Heart right ventricle (tissue), 16 donors: ENCODE measurements at regions of chr12 and their contacts with region 1.

Region 1: DNA sequence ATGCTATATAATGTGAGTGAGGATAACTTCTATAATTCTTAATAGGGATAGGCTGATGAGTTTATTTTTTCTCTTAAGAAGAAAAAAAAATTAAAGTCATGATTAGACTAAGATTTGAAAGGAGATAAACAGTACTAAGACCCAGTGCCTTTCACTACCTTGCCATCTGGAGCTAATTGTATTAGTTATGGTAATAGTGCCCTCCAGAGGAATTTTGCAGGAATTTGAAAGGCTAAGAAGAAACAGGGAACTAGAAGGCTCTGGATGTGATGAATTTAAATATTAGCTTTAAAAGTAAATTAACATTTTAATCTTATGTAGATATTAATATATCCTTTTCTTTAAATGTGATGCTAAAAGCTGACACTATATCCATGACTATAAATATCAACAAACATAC is 36.6 kb upstream of the PIK3C2G start:
- DNase-seq: no peak
- ATAC-seq: no peak
- H3K4me3 ChIP-seq: no peak overlapping the region
- H3K27ac ChIP-seq: no peak overlapping the region
- H3K4me1 ChIP-seq: no peaks in the 10 kb centered on the region
- H3K27me3 ChIP-seq: no peaks in the 10 kb centered on the region
- CTCF ChIP-seq: peak in 7 of 9 donors; percentile 25 to 57 (median 45)

Region 2: DNA sequence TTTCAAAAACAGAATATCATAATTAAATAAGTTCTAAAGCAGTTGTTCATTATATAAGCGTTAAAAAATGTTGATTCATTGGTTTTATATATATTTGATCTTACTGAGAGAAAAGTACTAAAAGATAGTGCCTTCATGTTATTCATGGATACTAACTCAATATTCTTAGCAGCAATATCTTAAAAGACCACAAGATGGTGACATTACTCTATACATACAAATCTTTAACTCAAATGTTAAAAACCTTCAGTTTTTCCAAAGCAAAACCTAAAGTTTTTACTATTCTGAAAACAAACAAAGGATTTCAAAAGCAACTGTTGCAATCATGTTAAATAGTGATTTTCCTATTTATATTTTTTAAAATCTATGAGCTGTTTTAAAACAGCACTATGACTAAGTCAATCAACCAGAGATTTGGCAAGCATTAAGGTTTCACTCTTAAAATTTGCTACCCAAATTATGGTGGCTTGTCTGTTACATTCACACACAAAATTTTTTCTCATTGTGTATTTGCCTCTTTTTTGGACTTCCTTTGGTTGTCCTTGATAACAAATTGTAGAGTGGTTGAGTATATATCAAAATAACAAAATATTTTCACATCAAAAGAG is 84.7 kb before region 1 on chr12:
- intact Hi-C with region 1: loop called in 4 of 10 experiments (anchors 5 to 10 kb)
- DNase-seq: no peak
- ATAC-seq: no peak
- H3K4me3 ChIP-seq: no peak overlapping the region
- H3K27ac ChIP-seq: no peak overlapping the region
- H3K4me1 ChIP-seq: peaks cover 0 to 21% (median 0%) of the 10 kb centered on the region in 9 donors
- H3K27me3 ChIP-seq: no peaks in the 10 kb centered on the region
- CTCF ChIP-seq: peak; percentile 24 to 71 (median 67)

Region 3: GRCh38 chr12:18146363-18146762 is 78.4 kb before region 1 on chr12:
- intact Hi-C with region 1: loop called in 5 of 10 experiments (anchors 5 to 10 kb)
- DNase-seq: no peak
- ATAC-seq: no peak
- H3K4me3 ChIP-seq: no peak overlapping the region
- H3K27ac ChIP-seq: peak overlapping the region in 1 of 10 donors; percentile 61
- H3K4me1 ChIP-seq: peaks cover 0 to 16% (median 0%) of the 10 kb centered on the region in 9 donors
- H3K27me3 ChIP-seq: peaks cover 0 to 3% (median 0%) of the 10 kb centered on the region in 7 donors
- CTCF ChIP-seq: no peak

Region 4: DNA sequence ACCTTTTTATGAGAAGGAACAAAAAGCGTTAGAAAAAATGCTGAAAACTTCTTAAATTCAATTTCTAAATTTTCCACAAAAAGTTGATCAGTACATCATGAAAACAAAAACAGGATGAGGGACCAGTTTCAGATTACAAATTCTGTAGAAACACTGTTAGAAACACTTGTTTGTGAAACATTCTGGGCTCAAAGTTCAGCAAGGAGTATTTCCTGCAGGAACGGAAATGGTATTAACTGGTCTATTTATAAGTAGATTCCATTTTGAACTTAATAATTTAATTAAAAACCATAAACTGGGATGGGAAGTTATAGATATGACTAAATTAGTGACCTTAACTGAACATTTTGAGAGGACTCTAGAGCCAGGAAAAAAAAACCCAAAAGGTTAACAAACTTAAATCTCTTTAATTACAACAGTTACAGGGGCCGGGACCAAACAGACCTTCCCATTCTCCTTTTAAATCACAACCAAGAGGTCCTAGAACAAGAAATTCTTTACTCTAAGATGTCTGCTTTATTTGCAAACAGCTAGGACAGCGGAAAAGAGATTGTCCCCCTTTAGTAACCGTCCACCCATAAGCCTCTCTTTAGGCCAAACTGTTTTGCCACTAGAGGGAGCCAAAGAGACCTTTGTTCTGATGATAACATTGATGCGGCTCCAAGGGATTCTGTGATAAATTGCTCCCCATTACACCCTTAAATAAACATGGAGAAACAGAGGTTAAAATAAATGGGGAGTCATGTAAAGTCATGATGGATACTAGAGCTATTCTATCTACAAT is 65.8 kb before region 1 on chr12:
- intact Hi-C with region 1: loop called in 1 of 10 experiments (anchors 10 kb)
- DNase-seq: no peak
- ATAC-seq: no peak
- H3K4me3 ChIP-seq: no peak overlapping the region
- H3K27ac ChIP-seq: no peak overlapping the region
- H3K4me1 ChIP-seq: no peaks in the 10 kb centered on the region
- H3K27me3 ChIP-seq: no peaks in the 10 kb centered on the region
- CTCF ChIP-seq: peak in 8 of 9 donors; percentile 9 to 64 (median 44)

Region 5: DNA sequence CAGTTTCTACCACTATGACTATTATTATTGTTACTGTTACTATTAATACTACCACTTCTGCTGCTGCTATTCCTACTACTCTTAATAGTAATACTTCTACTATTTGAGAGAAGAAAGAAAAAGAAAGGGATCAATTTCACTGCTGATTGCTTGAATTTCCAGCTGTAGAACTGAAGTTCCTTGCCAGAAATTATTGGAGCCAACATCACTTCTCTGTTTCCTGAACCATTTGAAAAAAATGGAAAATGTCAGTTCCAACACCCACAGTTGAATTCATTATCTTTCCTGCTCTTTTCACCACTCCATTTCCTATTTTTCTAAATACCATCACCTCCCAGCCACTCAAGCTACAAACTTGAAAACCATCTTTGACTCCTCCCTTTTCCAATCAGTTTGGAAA is 17.5 kb before region 1 on chr12:
- intact Hi-C with region 1: no loop called
- DNase-seq: no peak
- ATAC-seq: no peak
- H3K4me3 ChIP-seq: no peak overlapping the region
- H3K27ac ChIP-seq: no peak overlapping the region
- H3K4me1 ChIP-seq: no peaks in the 10 kb centered on the region
- H3K27me3 ChIP-seq: no peaks in the 10 kb centered on the region
- CTCF ChIP-seq: no peak

Region 6: DNA sequence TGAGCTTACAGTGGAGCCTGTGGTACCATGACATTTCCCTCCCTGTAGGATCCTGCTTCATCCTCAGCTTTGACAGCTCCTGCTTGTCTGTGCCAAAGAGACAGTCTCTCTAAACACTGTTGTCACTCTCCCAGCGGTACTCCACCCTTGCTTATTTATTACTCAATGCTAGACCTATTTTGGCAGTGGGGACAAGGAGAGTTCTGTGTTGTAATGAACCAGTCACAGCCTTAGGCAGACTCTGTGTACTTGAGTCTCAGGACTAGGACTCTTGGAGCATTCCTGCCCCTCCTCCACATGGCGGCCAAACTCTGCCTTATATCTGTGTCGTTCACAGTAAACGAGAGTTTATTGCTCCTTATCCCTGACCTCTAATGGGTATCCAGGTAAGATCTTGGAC is 107.4 kb after region 1 on chr12:
- intact Hi-C with region 1: no loop called
- DNase-seq: peak in 1 of 2 donors; percentile 10
- ATAC-seq: peak in 6 of 8 donors; percentile 35 to 99 (median 68)
- H3K4me3 ChIP-seq: no peak overlapping the region
- H3K27ac ChIP-seq: no peak overlapping the region
- H3K4me1 ChIP-seq: peaks cover 0 to 4% (median 0%) of the 10 kb centered on the region in 9 donors
- H3K27me3 ChIP-seq: no peaks in the 10 kb centered on the region
- CTCF ChIP-seq: no peak